ENCODE measurements at regions of chr2 and their contacts with region 1.

Region 1: DNA sequence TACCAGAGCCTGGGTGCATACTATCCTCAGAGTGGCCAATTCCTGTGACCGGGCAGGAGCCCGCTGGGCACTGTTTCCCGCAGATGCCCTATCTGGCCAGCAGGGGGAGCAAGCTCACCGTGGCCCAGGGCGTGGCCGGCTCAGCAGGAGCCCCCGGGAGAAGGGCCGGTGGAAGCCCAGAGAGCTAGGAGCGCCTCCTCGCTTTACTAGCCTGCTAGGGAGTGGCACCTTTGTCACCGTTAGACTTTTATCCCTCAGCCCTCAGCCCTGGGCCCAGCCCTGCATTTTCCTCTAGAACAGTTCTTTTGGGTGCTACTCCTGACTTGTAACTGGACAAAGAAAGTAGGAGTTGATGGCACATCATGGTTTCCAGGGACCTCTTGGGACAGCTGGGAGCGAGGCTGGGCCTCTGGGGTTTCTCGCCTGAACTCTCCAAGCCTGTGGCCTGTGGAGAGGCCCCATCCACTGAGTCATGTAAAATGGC is 24.0 kb downstream of the TMEM177 start:
- DNase-seq: peak; percentile 50 to 64 (median 58)
- H3K4me3 ChIP-seq: no peak overlapping the region
- H3K27ac ChIP-seq: no peak overlapping the region
- H3K4me1 ChIP-seq: peaks cover 0 to 3% (median under 1%) of the 10 kb centered on the region in 4 experiments
- H3K27me3 ChIP-seq: peaks cover 0 to 2% (median 0%) of the 10 kb centered on the region in 5 experiments

Region 2: GRCh38 chr2:119759451-119760236 is 56.7 kb after region 1 on chr2 and contains the start of gene PTPN4:
- CTCF ChIA-PET with region 1: interaction called, 10 read pairs
- POLR2A ChIA-PET with region 1: no interaction called
- DNase-seq: peak; percentile 99 to 100 (median 99)
- H3K4me3 ChIP-seq: peak within 1 kb of the TSS; percentile 66 to 97 (median 91)
- H3K27ac ChIP-seq: peak within 1 kb of the TSS; percentile 83 to 90
- H3K4me1 ChIP-seq: peaks cover 12 to 38% (median 22%) of the 10 kb centered on the region in 4 experiments
- H3K27me3 ChIP-seq: no peaks in the 10 kb centered on the region

Region 3: DNA sequence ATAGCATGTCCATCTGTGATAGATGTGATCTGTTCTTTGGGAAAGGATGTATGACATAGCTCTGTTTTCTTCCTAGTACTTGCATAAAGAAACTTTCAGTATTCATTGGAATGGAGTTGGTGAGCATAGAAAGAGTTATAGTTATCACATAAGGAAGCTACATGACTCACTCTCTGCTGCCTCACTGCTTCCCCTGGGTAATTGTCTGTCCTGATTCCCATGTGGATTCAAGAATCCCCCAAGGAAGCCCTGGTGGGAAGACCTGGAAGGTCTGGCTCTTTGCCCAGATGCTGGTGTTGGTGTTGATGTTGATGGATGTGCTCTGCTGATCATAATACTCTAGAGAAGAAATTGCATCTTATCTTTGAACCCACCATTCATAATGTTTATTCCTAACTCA is 117.3 kb after region 1 on chr2:
- CTCF ChIA-PET with region 1: interaction called, 12 read pairs
- POLR2A ChIA-PET with region 1: no interaction called
- DNase-seq: no peak
- H3K4me3 ChIP-seq: no peak overlapping the region
- H3K27ac ChIP-seq: no peak overlapping the region
- H3K4me1 ChIP-seq: peaks cover 0 to 3% (median 0%) of the 10 kb centered on the region in 4 experiments
- H3K27me3 ChIP-seq: no peaks in the 10 kb centered on the region

Region 4: DNA sequence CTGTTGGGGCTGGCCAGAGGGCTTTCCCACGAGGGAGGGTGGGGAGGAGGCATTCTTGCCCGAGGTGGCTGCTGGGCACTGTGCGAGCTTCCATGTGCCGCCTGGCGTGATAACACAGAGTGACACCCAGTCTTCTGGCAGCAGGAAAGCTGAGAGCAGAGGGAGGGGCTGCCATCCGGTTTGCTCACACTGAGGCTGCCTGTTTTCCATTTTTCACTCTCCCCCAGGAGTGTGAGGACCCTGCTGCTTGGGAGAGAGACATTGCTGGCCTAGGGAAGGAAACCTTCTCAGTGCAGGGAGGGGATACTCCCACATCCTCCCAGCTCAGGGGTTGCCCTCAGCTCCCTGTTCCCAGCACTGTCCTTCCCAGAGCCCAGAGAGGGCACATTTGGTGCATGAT is 716.1 kb after region 1 on chr2:
- CTCF ChIA-PET with region 1: no interaction called
- POLR2A ChIA-PET with region 1: no interaction called
- DNase-seq: no peak
- H3K4me3 ChIP-seq: no peak overlapping the region
- H3K27ac ChIP-seq: no peak overlapping the region
- H3K4me1 ChIP-seq: no peaks in the 10 kb centered on the region
- H3K27me3 ChIP-seq: peaks cover 0 to 33% (median 14%) of the 10 kb centered on the region in 5 experiments

Measured in common myeloid progenitor, CD34-positive (primary cell).